Calu3 (cell line): ENCODE measurements at regions of chr12 and their contacts with region 1.

Region 1: DNA sequence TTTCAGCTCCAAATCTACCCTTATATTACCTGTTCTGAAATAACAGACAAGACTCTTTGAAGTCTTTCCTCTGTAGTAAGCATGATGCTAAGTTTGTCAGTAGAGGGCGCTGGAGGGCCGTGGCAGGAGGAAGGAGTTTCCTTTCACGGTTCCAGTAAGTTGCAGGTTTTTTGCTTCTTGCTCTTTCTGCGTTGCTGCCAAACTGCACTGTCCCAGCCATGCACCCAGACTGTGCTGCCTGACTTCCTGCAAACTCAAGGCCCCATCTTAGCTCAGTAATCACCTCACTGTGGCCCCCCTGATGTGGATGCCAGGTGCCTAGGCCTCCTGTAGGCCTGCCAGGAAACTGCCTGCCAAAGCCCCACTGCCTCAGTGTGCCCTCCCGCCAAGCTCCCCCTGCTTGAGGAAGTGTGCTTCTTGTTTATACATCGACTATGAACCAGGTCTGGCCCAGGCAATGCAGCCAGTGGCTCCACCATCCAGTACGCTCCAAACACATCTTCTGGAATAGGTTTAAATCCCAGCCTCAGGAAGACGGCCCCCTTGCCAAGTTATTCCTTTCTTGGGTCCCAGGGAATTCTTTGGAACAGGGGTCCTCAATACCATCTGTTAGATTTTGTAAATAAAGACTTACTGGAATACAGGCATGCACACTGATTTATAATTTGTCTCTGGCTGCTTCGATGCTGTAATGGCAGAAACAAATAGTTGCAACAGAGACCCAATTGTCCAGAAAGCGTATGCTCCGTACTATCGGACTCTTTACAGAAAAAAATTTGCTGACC is 193.7 kb upstream of the LRIG3 start:
- DNase-seq: peak; percentile 90
- H3K4me3 Mint-ChIP-seq: no peak overlapping the region
- H3K27ac Mint-ChIP-seq: no peak overlapping the region
- H3K4me1 Mint-ChIP-seq: peaks cover 7% of the 10 kb centered on the region
- H3K27me3 Mint-ChIP-seq: no peaks in the 10 kb centered on the region
- CTCF ChIP-seq: peak; percentile 89

Region 2: GRCh38 chr12:59149997-59150642 is 36.1 kb after region 1 on chr12:
- CTCF ChIA-PET with region 1: interaction called, 6 read pairs
- intact Hi-C with region 1: loop called (anchors 1 kb)
- DNase-seq: peak; percentile 53
- H3K4me3 Mint-ChIP-seq: no peak overlapping the region
- H3K27ac Mint-ChIP-seq: no peak overlapping the region
- H3K4me1 Mint-ChIP-seq: no peaks in the 10 kb centered on the region
- H3K27me3 Mint-ChIP-seq: no peaks in the 10 kb centered on the region
- CTCF ChIP-seq: peak; percentile 91

Region 3: GRCh38 chr12:59164991-59165718 is 51.1 kb after region 1 on chr12:
- CTCF ChIA-PET with region 1: interaction called, 4 read pairs
- intact Hi-C with region 1: loop called (anchors 5 kb)
- DNase-seq: peak; percentile 30
- H3K4me3 Mint-ChIP-seq: peak overlapping the region; percentile 22
- H3K27ac Mint-ChIP-seq: peak overlapping the region; percentile 54
- H3K4me1 Mint-ChIP-seq: peaks cover 40% of the 10 kb centered on the region
- H3K27me3 Mint-ChIP-seq: no peaks in the 10 kb centered on the region
- CTCF ChIP-seq: peak; percentile 60

Region 4: DNA sequence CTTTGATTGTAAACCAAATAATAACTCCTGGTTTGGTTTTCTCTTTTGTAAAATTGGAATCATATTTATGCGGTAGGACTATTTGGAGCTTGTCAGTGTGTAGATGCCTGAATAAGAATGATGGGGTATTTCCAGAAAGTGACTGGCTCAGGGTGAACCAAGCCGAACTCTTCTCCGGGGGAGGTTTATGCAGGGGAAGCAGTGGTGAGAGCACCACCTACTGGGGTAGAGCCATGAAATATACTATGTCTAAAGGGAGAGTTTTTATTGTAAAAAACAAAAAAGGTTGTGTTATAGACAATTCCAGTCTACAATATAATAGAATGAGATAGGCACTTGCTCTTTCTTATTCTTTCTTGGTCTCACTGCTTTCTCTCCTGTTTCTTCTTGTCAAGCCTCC is 258.9 kb after region 1 on chr12:
- CTCF ChIA-PET with region 1: no interaction called
- intact Hi-C with region 1: loop called (anchors 1 kb)
- DNase-seq: peak; percentile 51
- H3K4me3 Mint-ChIP-seq: no peak overlapping the region
- H3K27ac Mint-ChIP-seq: no peak overlapping the region
- H3K4me1 Mint-ChIP-seq: no peaks in the 10 kb centered on the region
- H3K27me3 Mint-ChIP-seq: no peaks in the 10 kb centered on the region
- CTCF ChIP-seq: no peak